ENCODE measurements at regions of chr1 and their contacts with region 1.

Region 1: GRCh38 chr1:62746085-62746808 is 37.7 kb upstream of the ATG4C start:
- DNase-seq: no peak
- ATAC-seq: peak in 1 of 4 donors; percentile 61
- H3K4me3 ChIP-seq: no peak overlapping the region
- H3K27ac ChIP-seq: no peak overlapping the region
- H3K4me1 ChIP-seq: peaks cover 5% of the 10 kb centered on the region
- H3K27me3 ChIP-seq: no peaks in the 10 kb centered on the region
- CTCF ChIP-seq: peak; percentile 61

Region 2: DNA sequence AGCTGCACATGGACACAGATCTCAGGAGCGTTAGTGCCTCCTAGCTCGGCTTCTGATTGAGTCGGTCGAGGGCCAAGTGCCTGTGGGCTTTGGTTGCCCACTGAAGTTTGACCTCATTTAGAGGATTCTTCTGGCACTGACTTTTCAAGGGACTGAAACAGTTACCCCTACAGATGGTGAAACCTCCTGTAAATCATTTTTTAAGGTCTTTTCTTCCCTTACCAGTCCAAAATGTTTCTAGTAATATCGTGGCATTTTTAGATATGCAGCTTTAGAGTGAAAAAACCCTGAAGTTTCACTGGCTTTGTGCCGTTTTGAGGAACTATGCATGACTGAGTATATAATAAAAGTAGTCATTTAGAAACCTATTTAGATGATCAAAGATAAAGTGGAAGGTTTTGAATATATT is 586.3 kb before region 1 on chr1:
- intact Hi-C with region 1: loop called in 1 of 2 experiments (anchors 10 kb)
- DNase-seq: no peak
- ATAC-seq: no peak
- H3K4me3 ChIP-seq: no peak overlapping the region
- H3K27ac ChIP-seq: no peak overlapping the region
- H3K4me1 ChIP-seq: no peaks in the 10 kb centered on the region
- H3K27me3 ChIP-seq: no peaks in the 10 kb centered on the region
- CTCF ChIP-seq: no peak

Region 3: DNA sequence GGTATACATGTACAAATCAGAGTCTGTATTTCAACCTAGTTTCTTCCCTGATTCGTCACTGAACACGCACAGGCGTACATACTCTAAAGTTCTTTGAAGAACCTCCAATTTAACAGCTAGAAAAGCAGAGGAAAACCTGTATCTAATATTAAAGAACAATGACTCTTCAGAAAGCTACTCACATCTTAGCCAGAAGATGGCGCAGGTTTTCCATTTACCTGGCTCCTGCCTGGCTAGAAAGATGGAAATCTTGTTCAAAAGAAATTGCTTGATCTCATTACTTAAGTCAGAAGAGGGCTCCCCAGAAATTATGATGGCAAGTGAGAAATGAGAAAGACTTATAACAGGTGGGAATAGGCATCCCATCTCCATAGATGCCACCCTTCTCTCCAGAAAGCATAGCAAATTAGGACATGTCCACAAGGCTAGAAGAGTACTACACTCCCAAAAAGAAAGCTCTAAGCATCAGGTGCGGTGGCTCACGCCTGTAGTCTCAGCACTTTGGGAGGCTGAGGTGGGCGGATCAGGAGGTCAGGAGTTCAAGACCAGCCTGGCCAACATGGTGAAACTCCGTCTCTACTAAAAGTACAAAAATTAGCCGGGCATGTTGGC is 570.6 kb before region 1 on chr1:
- intact Hi-C with region 1: loop called in 1 of 2 experiments (anchors 5 kb)
- DNase-seq: no peak
- ATAC-seq: peak in 2 of 4 donors; percentile 31 to 56
- H3K4me3 ChIP-seq: no peak overlapping the region
- H3K27ac ChIP-seq: no peak overlapping the region
- H3K4me1 ChIP-seq: no peaks in the 10 kb centered on the region
- H3K27me3 ChIP-seq: peaks cover 0 to 4% (median 0%) of the 10 kb centered on the region in 3 donors
- CTCF ChIP-seq: peak; percentile 79

Region 4: DNA sequence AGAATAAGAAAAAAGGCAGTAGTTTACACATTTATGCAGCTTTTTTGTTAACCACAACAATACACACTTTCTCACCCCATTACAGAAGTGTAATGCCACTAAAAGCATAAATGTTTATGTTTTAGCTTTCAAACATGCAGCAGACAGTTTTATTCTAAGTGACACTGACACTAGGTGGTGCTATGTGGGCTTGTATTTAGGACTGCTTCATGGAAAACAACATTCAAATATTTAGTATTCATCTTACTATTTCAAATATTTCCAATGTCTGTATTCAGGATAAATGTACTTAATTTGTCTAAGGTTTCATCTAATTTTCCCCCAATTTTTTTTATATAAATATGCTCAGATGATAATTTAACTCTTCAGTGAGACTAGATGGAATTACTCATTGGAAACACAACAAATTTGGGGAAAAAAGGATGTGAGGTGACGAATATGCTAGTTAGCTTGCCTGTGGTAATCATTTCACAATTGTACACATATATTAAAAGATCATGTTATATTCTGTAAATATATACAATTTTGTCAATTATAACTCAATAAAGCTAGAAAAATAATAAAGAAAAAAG is 238.0 kb before region 1 on chr1:
- intact Hi-C with region 1: loop called (anchors 2 to 5 kb)
- DNase-seq: no peak
- ATAC-seq: peak in 1 of 4 donors; percentile 62
- H3K4me3 ChIP-seq: no peak overlapping the region
- H3K27ac ChIP-seq: no peak overlapping the region
- H3K4me1 ChIP-seq: no peaks in the 10 kb centered on the region
- H3K27me3 ChIP-seq: no peaks in the 10 kb centered on the region
- CTCF ChIP-seq: peak; percentile 58